Activated CD8-positive, alpha-beta memory T cell treated with anti-CD3 and anti-CD28 coated beads, Interleukin-2, amount 10 ng/mL, durations not matched to agents 7 days and 5 days (primary cell): ENCODE measurements at regions of chr15 and their contacts with region 1.

Region 1: DNA sequence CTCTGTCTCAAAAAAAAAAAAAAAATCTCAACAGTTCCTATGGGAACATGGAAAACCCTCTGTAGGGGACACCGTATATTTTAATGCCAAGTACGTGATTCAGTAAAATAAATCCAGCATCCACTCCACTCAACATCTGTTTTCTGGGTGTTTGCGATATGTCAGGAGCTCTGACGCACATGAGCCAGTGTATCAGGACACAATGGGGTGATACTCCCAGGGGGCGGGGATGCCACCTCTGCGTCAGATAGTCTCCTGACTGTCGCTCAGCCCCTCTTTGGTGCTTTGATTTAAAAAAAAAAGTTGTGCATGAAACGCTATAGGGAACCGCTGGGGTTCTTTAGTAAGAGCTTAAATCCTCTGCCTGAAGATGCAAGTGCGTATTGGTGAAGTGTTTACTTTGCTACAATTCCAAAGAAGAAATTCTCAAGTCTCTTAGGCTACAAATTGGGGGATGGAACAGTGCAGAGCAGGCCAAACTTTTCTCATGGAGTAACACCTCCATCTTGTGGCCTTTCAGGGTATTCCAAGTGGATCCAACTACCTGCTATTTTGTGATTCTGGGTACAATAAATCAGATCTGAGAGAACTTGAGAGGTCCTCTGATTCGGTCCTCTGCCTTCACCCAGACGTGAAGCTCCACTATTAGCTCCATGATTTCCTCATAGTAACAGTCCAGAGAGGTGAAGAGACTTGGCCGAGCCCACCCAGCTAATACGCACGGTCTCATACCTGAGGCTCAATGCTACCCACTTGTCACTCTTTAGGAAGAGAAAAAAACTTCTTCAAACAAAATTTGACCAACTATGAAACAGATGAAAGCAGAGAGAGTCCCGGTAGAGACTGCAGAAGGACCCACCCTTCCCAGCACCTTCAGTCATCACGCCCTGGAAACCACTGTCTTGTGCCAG is 9.3 kb upstream of the NR2E3 start:
- DNase-seq: peak; percentile 51
- ATAC-seq: peak; percentile 47
- H3K4me3 Mint-ChIP-seq: no peak overlapping the region
- H3K27ac Mint-ChIP-seq: no peak overlapping the region
- H3K4me1 Mint-ChIP-seq: peaks cover 1% of the 10 kb centered on the region
- H3K27me3 Mint-ChIP-seq: peaks cover 18% of the 10 kb centered on the region

Region 2: DNA sequence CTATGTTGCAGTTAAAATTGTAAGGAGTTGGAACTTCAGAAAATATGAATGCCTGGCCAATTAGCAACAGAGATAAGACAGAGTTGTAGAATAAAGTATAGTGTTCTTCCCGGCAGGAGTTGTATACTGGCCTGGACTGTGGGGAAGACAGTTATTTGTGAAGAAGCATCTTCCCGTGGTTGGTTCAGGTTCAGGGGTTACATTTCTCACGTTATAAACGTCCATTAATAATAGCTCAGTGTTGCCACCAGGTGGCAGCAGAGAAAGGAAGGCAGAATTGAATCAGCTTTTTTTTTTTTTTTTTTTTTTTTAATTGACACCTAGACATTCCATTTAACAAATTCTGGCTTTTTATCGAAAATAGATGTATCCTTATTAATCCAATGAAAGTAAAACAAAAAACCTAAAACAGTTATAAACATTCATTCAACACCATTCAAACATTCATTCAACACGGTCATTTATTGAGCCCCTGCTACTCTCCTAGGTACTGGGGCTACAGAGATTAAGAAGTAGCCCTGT is 57.2 kb before region 1 on chr15:
- CTCF ChIA-PET with region 1: interaction called, 35 read pairs
- DNase-seq: peak; percentile 67
- ATAC-seq: no peak
- H3K4me3 Mint-ChIP-seq: no peak overlapping the region
- H3K27ac Mint-ChIP-seq: no peak overlapping the region
- H3K4me1 Mint-ChIP-seq: peaks cover 7% of the 10 kb centered on the region
- H3K27me3 Mint-ChIP-seq: peaks cover 34% of the 10 kb centered on the region

Region 3: GRCh38 chr15:71752604-71753289 is 48.3 kb before region 1 on chr15:
- CTCF ChIA-PET with region 1: interaction called, 32 read pairs
- DNase-seq: peak; percentile 70
- ATAC-seq: peak; percentile 58
- H3K4me3 Mint-ChIP-seq: no peak overlapping the region
- H3K27ac Mint-ChIP-seq: no peak overlapping the region
- H3K4me1 Mint-ChIP-seq: peaks cover 20% of the 10 kb centered on the region
- H3K27me3 Mint-ChIP-seq: peaks cover 21% of the 10 kb centered on the region

Region 4: GRCh38 chr15:71780115-71780976 is 20.7 kb before region 1 on chr15:
- CTCF ChIA-PET with region 1: interaction called, 11 read pairs
- DNase-seq: peak; percentile 63
- ATAC-seq: peak; percentile 73
- H3K4me3 Mint-ChIP-seq: peak overlapping the region; percentile 37
- H3K27ac Mint-ChIP-seq: peak overlapping the region; percentile 82
- H3K4me1 Mint-ChIP-seq: peaks cover 27% of the 10 kb centered on the region
- H3K27me3 Mint-ChIP-seq: peaks cover 6% of the 10 kb centered on the region

Region 5: DNA sequence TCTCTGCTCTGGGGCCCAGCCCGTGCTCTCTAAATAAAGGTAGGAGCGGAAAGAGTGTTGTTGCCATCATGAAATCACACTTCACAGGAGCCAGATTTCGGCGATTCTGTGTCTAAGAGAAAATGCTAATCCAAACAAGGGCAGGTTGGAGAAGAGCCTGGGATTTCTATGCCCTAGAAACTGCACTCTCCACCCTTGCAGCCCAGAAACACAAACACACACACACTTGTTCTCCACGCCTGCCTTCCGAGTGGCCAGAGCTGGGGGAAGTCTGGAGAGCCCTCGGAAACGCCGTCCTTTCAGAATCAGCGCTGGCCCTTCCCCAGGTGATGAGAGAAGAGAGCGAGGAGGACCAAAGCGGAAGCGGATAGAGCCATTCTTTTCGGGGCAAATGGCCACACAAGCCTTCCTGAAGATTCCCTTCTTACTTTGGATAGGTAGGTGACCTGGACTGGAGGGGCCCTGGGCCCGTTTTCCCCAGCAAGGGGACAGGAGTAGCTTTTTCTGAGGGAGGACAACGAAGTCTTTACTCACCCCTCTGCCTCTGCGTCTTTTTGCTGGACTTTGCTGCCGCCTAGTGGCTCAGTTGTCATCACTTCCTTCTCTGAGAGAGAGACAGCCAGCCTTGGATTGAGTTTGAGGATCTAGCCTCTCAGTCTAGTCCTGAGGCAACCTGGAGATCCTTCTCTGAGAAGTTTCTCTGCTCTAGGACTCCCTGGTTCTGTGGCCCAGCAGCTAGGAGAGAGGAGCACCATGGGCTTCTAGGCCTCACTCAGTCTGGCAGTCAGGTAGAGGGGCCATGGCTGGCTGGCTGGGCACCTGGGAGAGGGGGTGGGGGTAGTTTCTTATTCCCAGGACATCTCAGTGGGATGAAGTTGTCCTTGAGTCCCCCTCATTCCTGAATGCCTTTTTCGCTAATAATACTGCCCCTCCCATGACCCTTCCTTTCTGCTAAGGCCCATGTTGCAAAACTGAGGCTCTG is 354.8 kb after region 1 on chr15:
- CTCF ChIA-PET with region 1: interaction called, 27 read pairs
- DNase-seq: peak; percentile 89
- ATAC-seq: peak; percentile 95
- H3K4me3 Mint-ChIP-seq: peak overlapping the region; percentile 65
- H3K27ac Mint-ChIP-seq: no peak overlapping the region
- H3K4me1 Mint-ChIP-seq: peaks cover 4% of the 10 kb centered on the region
- H3K27me3 Mint-ChIP-seq: no peaks in the 10 kb centered on the region